HEK293 (cell line): ENCODE measurements at regions of chr2 and their contacts with region 1.

Region 1: GRCh38 chr2:71299507-71299906 is 32.1 kb upstream of the ZNF638 start:
- H3K4me3 ChIP-seq: no peak overlapping the region
- H3K27ac ChIP-seq: no peak overlapping the region
- H3K4me1 ChIP-seq: no peaks in the 10 kb centered on the region
- CTCF ChIP-seq: no peak

Region 2: DNA sequence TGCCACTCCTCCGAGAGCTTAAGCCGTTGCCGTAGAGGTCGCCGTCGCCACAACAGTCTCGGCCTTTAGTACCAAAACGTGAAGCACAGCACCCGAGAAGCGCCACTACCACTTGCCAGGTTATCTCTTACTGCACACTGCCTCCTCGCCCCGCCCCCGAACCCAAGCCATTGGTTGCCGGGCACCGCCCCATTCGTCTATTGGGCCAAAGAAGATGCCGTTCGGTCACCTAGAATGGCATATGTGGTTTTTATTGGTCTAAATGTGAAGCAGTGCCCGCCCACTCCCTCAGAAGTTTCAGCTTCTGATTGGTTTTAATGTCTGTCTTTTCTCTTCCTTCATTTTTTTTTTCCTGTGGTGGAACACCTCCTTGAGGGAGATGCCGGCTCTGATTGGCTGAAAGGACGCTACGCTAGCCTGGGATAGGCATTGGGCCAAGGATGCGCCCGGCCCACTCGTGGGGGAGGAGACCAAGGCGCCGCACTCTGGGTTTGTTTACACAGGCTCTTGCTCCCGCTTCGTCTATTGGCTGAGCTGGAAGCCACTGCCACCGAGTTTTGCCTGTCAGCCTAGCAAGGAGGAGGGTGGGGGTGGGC is 72.4 kb before region 1 on chr2 and contains the start of gene PAIP2B:
- CTCF ChIA-PET with region 1: interaction called, 12 read pairs
- POLR2A ChIA-PET with region 1: interaction called, 4 read pairs
- H3K4me3 ChIP-seq: peak within 1 kb of the TSS; percentile 61
- H3K27ac ChIP-seq: peak within 1 kb of the TSS; percentile 64
- H3K4me1 ChIP-seq: peaks cover 5% of the 10 kb centered on the region; the same call in 1 of the 2 replicates
- CTCF ChIP-seq: no peak; the same call in 1 of the 2 replicates

Region 3: DNA sequence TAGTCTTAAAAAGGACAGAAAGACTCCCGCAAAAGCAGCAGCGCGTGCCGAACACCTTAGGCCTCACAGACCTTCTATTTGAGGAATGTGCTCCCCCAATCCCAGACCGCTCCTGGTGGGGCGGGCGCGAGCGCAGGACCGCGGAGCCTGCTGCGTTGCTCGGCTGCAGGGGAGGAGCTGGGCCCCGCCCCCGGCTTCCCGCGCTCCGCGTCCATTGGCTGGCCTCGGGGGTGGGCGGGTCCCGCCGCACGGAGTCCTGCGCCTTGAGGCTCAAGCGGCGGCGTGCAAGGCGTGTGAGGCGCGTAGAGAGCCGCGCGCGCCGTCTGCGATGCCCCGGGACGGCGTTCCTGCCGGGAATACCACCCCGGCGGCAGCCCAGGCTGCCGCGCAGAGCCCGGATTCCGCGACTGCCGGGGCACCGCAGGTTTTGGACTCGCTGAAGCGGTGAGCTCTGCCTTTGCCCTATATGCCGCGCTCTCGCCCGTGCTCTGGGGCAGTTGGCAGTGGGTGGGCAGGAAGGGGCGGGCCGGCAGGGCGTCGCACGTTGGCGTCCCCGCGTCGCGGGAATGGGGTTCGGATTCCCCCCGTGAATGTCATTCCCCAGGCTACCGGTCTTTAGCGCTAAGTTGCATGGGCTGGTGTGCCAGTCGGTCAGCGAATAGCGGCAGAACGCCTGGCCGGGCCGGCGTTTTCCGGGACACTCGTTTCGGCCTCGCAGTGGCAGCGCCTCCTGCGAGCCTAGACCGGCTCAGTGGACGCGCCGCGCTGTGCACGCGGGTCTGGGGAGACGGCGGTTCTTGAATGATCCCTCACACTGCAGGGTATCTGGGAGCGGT is 23.0 kb before region 1 on chr2:
- CTCF ChIA-PET with region 1: interaction called, 26 read pairs
- POLR2A ChIA-PET with region 1: interaction called, 3 read pairs
- H3K4me3 ChIP-seq: peak overlapping the region; percentile 72
- H3K27ac ChIP-seq: peak overlapping the region; percentile 54; the same call in 1 of the 2 replicates
- H3K4me1 ChIP-seq: peaks cover 10% of the 10 kb centered on the region
- CTCF ChIP-seq: peak; percentile 55

Region 4: GRCh38 chr2:71282495-71282894 is 17.0 kb before region 1 on chr2:
- CTCF ChIA-PET with region 1: interaction called, 26 read pairs
- POLR2A ChIA-PET with region 1: interaction called, 3 read pairs
- H3K4me3 ChIP-seq: no peak overlapping the region
- H3K27ac ChIP-seq: no peak overlapping the region
- H3K4me1 ChIP-seq: peaks cover 10% of the 10 kb centered on the region
- CTCF ChIP-seq: 0 out of 2 replicates have a peak, but pooled peaks have one; percentile 54

Region 5: DNA sequence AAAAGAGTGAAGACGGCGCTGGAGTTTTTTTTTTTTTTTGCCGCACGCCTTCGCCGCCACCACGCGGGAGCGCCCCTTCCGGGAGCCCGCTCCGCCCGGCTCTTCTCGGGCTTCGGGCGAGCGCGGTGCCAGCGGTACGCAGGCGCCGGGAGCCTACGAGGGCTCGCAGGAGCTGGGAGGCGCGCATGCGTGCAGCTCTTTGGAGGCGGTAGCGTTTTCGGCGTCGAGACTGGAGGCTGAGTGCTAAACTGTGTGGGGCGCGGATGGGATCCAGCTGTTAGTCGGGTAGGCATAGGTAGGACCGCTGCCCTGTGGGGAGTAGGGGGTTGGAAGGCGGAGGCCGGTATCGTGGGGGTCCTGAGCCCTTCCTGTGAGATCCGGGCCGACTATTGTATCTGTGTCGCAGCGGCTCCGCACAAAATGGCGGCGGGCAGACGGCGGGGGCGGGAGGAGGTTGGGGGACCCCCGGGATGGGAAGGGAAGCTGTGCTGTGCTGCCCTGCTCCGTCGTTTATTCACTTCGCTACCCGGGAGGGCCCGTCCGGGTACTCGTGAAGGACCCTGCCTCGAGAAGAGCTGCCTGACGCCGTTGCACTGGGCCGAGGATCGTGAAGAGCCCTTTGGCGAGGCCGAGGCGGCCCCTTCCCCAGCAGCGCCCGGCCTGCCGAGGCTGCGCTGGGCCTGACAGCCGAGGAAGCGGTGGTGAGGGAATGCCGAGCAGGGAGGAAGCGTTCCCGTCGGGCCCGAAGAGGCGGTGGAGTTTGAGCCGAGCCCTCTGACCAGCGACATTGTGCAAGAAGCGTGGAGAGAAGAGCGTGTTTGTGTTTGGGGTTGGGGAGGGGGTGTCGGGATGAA is 32.3 kb after region 1 on chr2 and contains the start of gene ZNF638:
- CTCF ChIA-PET with region 1: interaction called, 24 read pairs
- POLR2A ChIA-PET with region 1: interaction called, 7 read pairs
- H3K4me3 ChIP-seq: peak within 1 kb of the TSS; percentile 89
- H3K27ac ChIP-seq: peak within 1 kb of the TSS; percentile 76
- H3K4me1 ChIP-seq: peaks cover 16% of the 10 kb centered on the region
- CTCF ChIP-seq: peak; percentile 90

Region 6: DNA sequence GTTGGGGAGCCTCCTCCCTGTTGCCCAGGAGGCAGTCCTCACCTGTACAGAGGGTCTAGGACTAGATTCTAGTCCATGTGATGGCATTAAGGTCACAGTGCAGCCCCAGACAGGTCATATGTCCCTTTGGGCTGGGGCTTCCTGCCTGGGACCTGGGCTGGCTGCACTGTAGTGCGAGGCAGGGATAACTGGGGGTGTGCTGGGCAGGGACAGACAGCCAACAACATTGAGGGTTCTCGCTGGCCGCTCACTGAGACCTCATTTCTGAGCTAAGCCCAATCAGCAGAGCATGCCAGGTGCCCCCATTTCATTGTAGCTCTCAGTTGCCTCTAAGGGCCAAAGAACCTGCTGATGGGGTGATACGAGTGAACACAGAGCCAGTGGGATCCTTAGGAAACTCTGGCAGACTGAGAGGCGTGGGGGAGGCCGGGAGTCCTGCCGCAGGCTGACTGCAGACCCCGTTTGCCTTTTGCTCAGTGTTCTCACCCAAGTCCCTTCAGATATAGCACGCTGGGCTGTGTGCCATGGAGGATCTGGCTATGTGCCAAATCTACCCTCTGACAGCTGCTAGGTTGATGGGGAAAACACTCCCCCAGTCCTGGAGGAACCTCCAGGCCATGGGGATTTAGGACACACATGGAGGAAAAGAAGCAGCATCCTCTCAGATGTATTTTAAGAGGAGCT is 205.7 kb after region 1 on chr2:
- CTCF ChIA-PET with region 1: interaction called, 94 read pairs
- POLR2A ChIA-PET with region 1: interaction called, 4 read pairs
- H3K4me3 ChIP-seq: no peak overlapping the region
- H3K27ac ChIP-seq: no peak overlapping the region
- H3K4me1 ChIP-seq: no peaks in the 10 kb centered on the region
- CTCF ChIP-seq: no peak

Region 7: GRCh38 chr2:71530641-71531332 is 231.3 kb after region 1 on chr2:
- CTCF ChIA-PET with region 1: interaction called, 10 read pairs
- POLR2A ChIA-PET with region 1: no interaction called
- H3K4me3 ChIP-seq: no peak overlapping the region
- H3K27ac ChIP-seq: no peak overlapping the region
- H3K4me1 ChIP-seq: no peaks in the 10 kb centered on the region
- CTCF ChIP-seq: no peak; the same call in 1 of the 2 replicates